Panc1 (cell line): ENCODE measurements at regions of chr5 and their contacts with region 1.

Region 1: GRCh38 chr5:69093771-69094482 is at the start of gene SLC30A5:
- DNase-seq: peak; percentile 99
- ATAC-seq: peak; percentile 100
- H3K4me3 ChIP-seq: peak within 1 kb of the TSS; percentile 83 to 98
- H3K27ac ChIP-seq: peak within 1 kb of the TSS; percentile 92
- H3K4me1 ChIP-seq: no peaks in the 10 kb centered on the region
- H3K27me3 ChIP-seq: no peaks in the 10 kb centered on the region
- CTCF ChIP-seq: peak; percentile 95
- total RNA-seq, gene SLC30A5: 61.3 TPM

Region 2: GRCh38 chr5:69042915-69043658 is 50.8 kb before region 1 on chr5:
- CTCF ChIA-PET with region 1: interaction called, 3 read pairs
- POLR2A ChIA-PET with region 1: no interaction called
- in situ Hi-C with region 1: no loop called
- intact Hi-C with region 1: loop called (anchors 10 kb)
- DNase-seq: peak; percentile 89
- ATAC-seq: peak; percentile 95
- H3K4me3 ChIP-seq: peak overlapping the region; percentile 50 to 86
- H3K27ac ChIP-seq: peak overlapping the region; percentile 65
- H3K4me1 ChIP-seq: peaks cover 4% of the 10 kb centered on the region; the same call in 1 of the 2 replicates
- H3K27me3 ChIP-seq: no peaks in the 10 kb centered on the region
- CTCF ChIP-seq: peak; percentile 80

Region 3: GRCh38 chr5:69369369-69370121 is 275.6 kb after region 1 on chr5 and contains the starts of genes AK6, RAD17 and TAF9:
- CTCF ChIA-PET with region 1: no interaction called
- POLR2A ChIA-PET with region 1: no interaction called
- in situ Hi-C with region 1: no loop called
- intact Hi-C with region 1: loop called (anchors 10 kb)
- DNase-seq: peak; percentile 88
- ATAC-seq: peak; percentile 97
- H3K4me3 ChIP-seq: peak within 1 kb of the TSS; percentile 70 to 100
- H3K27ac ChIP-seq: peak within 1 kb of the TSS; percentile 98
- H3K4me1 ChIP-seq: peaks cover 29% of the 10 kb centered on the region; the same call in 1 of the 2 replicates
- H3K27me3 ChIP-seq: no peaks in the 10 kb centered on the region
- CTCF ChIP-seq: no peak
- total RNA-seq, gene AK6: 61.3 TPM
- total RNA-seq, gene RAD17: 41.7 TPM
- total RNA-seq, gene TAF9: 142 TPM

Region 4: DNA sequence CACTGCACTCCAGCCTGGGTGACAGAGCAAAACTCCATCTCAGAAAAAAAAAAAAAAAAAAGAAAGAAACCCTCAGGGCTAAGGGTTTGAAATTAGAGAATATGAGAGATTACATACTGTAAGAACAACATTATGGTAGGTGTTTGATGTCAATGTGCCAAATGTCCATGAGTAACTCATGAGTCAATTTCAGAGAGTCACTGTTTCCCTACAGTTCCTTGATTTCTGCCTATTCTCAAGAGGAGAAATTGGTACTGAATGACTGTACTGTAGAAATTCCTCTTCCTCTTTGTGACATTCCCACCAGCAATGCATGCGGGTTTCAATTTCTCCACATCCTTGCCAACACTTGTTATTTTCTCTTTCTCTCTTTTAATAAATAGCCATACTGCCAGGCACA is 356.2 kb after region 1 on chr5:
- CTCF ChIA-PET with region 1: no interaction called
- POLR2A ChIA-PET with region 1: no interaction called
- in situ Hi-C with region 1: no loop called
- intact Hi-C with region 1: no loop called
- DNase-seq: peak; percentile 85
- ATAC-seq: peak; percentile 66; the same call in 1 of the 2 replicates
- H3K4me3 ChIP-seq: no peak overlapping the region
- H3K27ac ChIP-seq: no peak overlapping the region
- H3K4me1 ChIP-seq: peaks cover 5% of the 10 kb centered on the region
- H3K27me3 ChIP-seq: no peaks in the 10 kb centered on the region
- CTCF ChIP-seq: no peak